ENCODE measurements at regions of chr15 and their contacts with region 1.

Region 1: DNA sequence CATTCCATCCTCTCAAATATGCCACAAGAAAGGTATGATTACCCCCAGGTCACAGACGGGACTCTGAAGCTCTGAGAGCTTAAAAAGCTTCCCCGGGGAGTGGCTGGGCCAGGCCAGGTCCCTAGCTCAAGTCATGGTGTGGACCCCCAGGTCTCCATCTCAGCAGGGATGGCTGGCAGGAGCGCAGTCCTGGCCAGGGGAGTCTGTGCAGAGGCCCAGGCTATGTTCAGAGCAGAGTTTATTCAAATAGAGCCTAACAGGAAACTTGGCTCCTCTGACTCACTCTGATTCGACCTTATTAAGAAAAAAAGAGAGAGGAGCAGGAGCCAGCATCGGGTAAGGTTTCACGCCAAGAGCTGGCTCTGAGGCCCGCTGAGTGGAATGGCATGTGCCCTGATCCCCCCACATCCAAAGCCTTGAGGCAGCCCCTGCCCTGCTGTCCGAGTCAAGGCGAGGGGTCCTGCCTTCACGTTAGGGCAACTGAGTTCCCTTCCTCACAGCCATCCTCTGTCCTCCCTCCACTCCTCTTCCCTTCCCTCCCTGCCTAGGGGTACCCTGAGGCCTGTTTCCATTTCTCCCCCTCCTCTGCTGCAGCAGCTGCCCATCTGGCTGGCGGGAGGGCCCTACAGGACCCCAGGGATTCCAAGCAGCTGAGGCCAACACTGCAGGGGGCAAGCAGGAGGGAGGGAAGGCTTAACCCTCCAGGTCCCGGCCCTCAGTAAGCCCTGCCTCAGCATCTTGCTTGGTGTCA is 1.9 kb upstream of the LOXL1 start:
- DNase-seq: peak; percentile 74
- H3K4me3 ChIP-seq: peak overlapping the region; percentile 3
- CTCF ChIP-seq: no peak

Region 2: GRCh38 chr15:73849641-73850040 is 74.7 kb before region 1 on chr15:
- in situ Hi-C with region 1: loop called (anchors 5 kb)
- DNase-seq: no peak
- H3K4me3 ChIP-seq: no peak overlapping the region
- CTCF ChIP-seq: no peak

Region 3: DNA sequence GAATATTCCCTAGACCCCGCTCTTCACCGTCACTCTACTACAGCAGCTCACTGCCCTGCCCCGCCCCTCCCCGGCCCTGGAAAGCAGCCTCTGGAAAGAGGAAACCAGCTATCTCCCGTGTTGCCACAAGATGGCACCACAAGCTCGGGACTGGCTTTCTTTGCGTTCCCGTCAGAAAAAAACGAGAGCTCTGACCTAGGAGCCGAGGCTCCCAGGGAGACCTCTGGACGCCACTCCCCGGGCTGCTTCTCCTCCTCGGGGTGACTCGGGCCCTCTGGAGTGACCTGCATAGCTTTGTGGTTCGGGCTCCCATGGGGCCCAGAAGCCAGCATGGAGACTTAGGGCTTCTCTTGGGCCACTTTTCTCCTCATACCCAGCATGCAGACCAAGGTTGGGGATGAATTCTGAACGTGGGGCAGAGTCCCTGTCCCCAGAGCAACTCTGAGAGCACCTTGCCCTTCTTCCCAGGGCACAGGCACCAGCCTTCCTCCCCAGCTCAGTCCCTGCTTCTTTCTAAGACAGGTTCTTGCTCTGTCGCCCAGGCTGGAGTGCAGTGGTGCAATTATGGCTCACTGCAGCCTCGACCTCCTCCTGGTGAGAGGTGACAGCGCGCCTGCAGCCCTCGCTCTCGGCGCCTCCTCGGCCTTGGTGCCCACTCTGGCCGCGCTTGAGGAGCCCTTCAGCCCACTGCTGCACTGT is 48.8 kb after region 1 on chr15:
- in situ Hi-C with region 1: no loop called
- DNase-seq: peak; percentile 63
- H3K4me3 ChIP-seq: no peak overlapping the region
- CTCF ChIP-seq: peak; percentile 93